SK-N-SH (cell line): ENCODE measurements at regions of chr16 and their contacts with region 1.

Region 1: DNA sequence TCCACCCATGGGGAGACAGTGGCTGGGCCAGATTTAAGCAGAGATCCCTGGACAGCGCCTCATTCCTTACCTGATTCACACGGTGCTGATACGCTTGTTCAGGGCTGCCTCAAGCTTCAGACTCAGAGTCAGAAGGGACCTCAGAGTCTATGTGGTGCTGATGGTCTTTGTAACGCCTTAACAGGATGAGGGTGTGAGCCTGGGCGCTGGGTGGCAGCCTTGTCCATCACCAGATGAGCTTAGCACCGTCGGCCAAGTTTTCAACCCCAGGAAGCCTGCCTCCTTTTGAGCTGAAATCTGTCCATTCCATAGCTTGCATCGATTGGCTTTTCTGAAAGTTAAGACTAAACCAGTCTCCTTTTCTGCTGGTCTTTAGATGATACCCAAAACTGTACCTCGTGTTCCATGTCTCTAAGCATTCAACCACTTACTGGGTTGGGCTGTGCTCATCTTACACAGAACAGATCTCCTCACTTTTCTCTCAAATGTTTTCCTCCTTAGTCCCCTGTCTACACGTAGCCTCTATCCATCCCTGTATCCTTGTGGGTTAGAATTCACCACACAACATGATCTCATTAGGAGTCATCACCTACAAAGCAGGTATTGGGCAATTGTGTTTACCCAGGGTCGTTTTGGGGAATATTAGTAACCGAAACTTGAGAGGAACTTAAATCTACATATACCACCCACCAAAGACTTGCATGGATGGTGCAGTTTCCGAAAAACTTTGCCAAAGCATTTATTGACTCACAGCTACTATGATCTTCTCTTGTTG is 573.4 kb downstream of the CDH13 start:
- DNase-seq: no peak
- H3K4me3 ChIP-seq: no peak overlapping the region
- H3K27ac ChIP-seq: no peak overlapping the region
- H3K4me1 ChIP-seq: no peaks in the 10 kb centered on the region
- H3K27me3 ChIP-seq: no peaks in the 10 kb centered on the region
- CTCF ChIP-seq: peak; percentile 48
- EP300 ChIP-seq: no peak
- RAD21 ChIP-seq: peak; percentile 45

Region 2: GRCh38 chr16:83215406-83216001 is 15.3 kb after region 1 on chr16:
- CTCF ChIA-PET with region 1: interaction called, 14 read pairs
- POLR2A ChIA-PET with region 1: no interaction called
- DNase-seq: peak; percentile 49
- H3K4me3 ChIP-seq: no peak overlapping the region
- H3K27ac ChIP-seq: no peak overlapping the region
- H3K4me1 ChIP-seq: no peaks in the 10 kb centered on the region
- H3K27me3 ChIP-seq: no peaks in the 10 kb centered on the region
- CTCF ChIP-seq: peak; percentile 76
- EP300 ChIP-seq: no peak
- RAD21 ChIP-seq: peak; percentile 54

Region 3: GRCh38 chr16:83402967-83403366 is 202.8 kb after region 1 on chr16:
- CTCF ChIA-PET with region 1: no interaction called
- POLR2A ChIA-PET with region 1: no interaction called
- DNase-seq: no peak
- H3K4me3 ChIP-seq: no peak overlapping the region
- H3K27ac ChIP-seq: peak overlapping the region in 1 of 2 experiments; percentile 89; a peak in 2 of 4 replicates
- H3K4me1 ChIP-seq: 0 out of 4 replicates have a peak, but pooled peaks cover 0 to 5% of the 10 kb centered on the region in 2 experiments
- H3K27me3 ChIP-seq: no peaks in the 10 kb centered on the region
- CTCF ChIP-seq: no peak
- EP300 ChIP-seq: 0 out of 4 replicates have a peak, but pooled peaks of 1 of the 2 experiments have one; percentile 38
- RAD21 ChIP-seq: no peak